ENCODE measurements at regions of chr9 and their contacts with region 1.

Region 1: DNA sequence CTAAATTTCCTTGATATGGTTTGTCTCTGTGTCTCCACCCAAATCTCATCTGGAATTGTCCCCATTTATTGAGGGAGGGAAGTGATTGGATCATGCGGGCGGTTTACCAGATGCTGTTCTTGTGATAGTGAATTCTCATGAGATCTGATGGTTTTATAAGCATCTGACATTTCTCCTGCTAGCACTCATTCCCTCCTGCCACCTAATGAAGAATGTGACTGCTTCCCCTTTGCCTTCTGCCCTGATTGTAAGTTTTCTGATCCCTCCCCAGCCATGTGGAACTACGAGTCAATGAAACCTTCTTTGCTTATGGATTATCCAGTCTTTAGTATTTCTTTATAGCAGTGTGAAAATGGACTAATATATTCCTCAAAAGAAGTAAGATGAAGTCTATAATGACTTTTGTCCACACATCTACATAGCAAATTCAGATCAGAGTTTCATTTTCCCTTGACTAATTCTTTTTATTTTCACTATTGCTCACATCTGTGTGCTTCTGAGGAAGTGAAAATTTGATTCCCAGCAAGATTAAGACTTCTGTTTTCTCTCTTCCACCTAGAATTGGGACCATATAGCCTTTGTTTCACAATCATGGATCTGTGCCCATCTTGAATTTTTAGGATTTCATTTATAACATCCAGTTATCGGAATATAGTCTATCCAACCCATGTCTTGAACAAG is 393.5 kb downstream of the DMAC1 start:
- DNase-seq: no peak
- H3K4me3 Mint-ChIP-seq: no peak overlapping the region
- H3K27ac Mint-ChIP-seq: no peak overlapping the region
- H3K4me1 Mint-ChIP-seq: peaks cover 1% of the 10 kb centered on the region
- H3K27me3 Mint-ChIP-seq: peaks cover 25% of the 10 kb centered on the region

Region 2: GRCh38 chr9:7387840-7388239 is 18.2 kb before region 1 on chr9:
- CTCF ChIA-PET with region 1: no interaction called
- POLR2A ChIA-PET with region 1: no interaction called
- intact Hi-C with region 1: no loop called
- DNase-seq: no peak
- H3K4me3 Mint-ChIP-seq: no peak overlapping the region
- H3K27ac Mint-ChIP-seq: no peak overlapping the region
- H3K4me1 Mint-ChIP-seq: no peaks in the 10 kb centered on the region
- H3K27me3 Mint-ChIP-seq: peaks cover 3% of the 10 kb centered on the region

Region 3: GRCh38 chr9:7534211-7534935 is 128.3 kb after region 1 on chr9:
- CTCF ChIA-PET with region 1: interaction called, 3 read pairs
- POLR2A ChIA-PET with region 1: no interaction called
- intact Hi-C with region 1: loop called (anchors 1 kb)
- DNase-seq: peak; percentile 23
- H3K4me3 Mint-ChIP-seq: no peak overlapping the region
- H3K27ac Mint-ChIP-seq: peak overlapping the region; percentile 31
- H3K4me1 Mint-ChIP-seq: peaks cover 13% of the 10 kb centered on the region
- H3K27me3 Mint-ChIP-seq: peaks cover 16% of the 10 kb centered on the region

Measured in activated CD4-positive, alpha-beta memory T cell treated with anti-CD3 and anti-CD28 coated beads for 36 hours (primary cell).